ENCODE measurements at regions of chr9 and their contacts with region 1.

Region 1: DNA sequence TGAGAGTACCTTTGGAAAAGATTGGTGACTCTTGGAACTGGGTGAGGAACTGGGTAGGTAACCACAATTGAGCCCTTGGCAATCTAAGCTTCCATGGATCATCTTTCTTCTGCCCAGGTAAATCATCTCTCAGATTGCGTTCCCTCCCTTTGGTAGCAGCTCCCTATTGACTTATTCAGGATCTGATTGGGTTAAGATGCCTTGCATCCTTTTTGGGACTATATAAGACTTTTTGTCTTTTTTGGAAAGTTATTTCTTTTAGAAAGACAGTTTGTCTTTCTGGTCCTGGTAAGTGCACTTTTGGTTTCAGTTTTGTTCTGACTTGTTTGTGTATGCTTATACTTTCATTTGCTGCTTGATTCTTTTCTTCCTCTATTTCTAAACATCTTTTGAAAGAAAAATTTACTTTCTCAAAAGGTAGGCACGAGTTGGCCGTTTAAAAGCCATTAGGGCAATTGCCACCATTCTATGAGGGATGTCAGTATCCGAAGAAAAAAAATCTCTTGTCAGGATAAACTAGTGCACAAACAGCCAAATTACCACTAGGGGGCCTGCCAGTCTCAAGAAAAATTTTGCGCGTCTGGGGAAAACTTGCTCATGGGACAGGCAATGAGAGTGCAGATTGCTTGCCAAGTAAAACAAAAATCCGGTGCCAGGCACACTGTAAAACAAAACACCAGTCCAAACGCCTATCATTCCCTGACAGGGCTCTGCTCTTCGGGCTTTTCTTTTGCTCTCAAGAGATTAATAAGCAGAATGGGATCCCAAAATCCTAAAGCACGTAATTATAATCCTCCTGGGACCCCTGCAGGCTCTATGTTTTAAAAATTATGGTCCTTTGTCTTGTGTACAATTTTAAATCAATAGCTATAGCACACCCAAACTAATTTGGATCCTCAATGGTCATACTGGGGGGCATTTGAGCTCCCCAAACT is 12.8 kb downstream of the OR1J1 start:
- DNase-seq: peak in 5 of 6 donors; percentile 57 to 88 (median 82)
- ATAC-seq: peak; percentile 94 to 99 (median 98)
- H3K4me3 ChIP-seq: peak overlapping the region in 3 of 4 donors; percentile 5 to 28 (median 13)
- H3K27ac ChIP-seq: no peak overlapping the region
- H3K4me1 ChIP-seq: peaks cover 0 to 5% (median 0%) of the 10 kb centered on the region in 3 donors
- H3K27me3 ChIP-seq: no peaks in the 10 kb centered on the region
- CTCF ChIP-seq: peak; percentile 60 to 80 (median 74)

Region 2: GRCh38 chr9:122810306-122810946 is 345.5 kb after region 1 on chr9:
- intact Hi-C with region 1: loop called in 2 of 3 experiments (anchors 5 kb)
- DNase-seq: peak; percentile 52 to 81 (median 72)
- ATAC-seq: peak; percentile 92 to 99 (median 97)
- H3K4me3 ChIP-seq: no peak overlapping the region
- H3K27ac ChIP-seq: peak overlapping the region in 3 of 4 donors; percentile 26 to 55 (median 33)
- H3K4me1 ChIP-seq: peaks cover 3 to 7% (median 4%) of the 10 kb centered on the region in 3 donors
- H3K27me3 ChIP-seq: no peaks in the 10 kb centered on the region
- CTCF ChIP-seq: peak; percentile 31 to 66 (median 52)

Region 3: GRCh38 chr9:122991370-122991830 is 526.5 kb after region 1 on chr9:
- intact Hi-C with region 1: loop called in 1 of 3 experiments (anchors 10 kb)
- DNase-seq: peak in 1 of 6 donors; percentile 35
- ATAC-seq: peak; percentile 69 to 93 (median 90)
- H3K4me3 ChIP-seq: no peak overlapping the region
- H3K27ac ChIP-seq: no peak overlapping the region
- H3K4me1 ChIP-seq: peaks cover 0 to 4% (median 2%) of the 10 kb centered on the region in 3 donors
- H3K27me3 ChIP-seq: no peaks in the 10 kb centered on the region
- CTCF ChIP-seq: peak; percentile 30 to 57 (median 48)

Measured in pancreas (tissue), 10 donors.